HepG2 (cell line): ENCODE measurements at regions of chr7 and their contacts with region 1.

Region 1: DNA sequence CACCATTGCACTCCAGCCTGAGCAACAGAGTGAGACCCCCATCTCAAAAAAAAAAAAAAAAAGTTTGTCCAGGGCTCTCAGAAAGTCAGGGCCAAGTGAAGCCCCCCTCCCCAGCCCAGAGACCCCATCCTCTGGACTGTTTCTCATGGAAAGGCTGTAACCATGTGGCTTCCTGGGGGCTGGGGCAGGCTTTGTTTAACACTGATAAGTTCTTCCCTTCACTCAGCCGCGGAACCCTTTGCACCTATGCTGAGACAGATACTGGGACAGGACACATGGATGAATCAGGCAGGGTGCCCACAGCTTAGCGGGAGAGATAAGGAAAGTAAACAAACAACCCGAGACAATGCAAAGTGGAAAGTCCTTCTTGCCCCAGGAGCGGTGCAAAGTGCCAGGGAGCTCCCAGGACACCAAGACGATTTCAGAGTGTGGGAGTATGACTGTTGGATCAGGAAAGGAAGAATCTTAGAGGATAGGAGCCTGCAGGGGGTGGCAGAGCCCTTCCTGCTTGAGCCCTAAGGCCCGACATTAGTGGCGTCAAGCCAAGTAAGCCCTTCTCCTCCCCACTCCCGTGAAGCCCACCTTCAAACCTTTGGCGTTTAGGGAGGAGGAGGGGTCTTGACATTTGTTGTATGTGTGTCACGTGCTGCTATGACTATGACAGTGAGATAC is 11.6 kb downstream of the MLXIPL start:
- DNase-seq: peak; percentile 99
- ATAC-seq: peak; percentile 80
- H3K4me3 ChIP-seq: peak overlapping the region in 1 of 3 experiments; percentile 6; a peak in 1 of 6 replicates
- H3K27ac ChIP-seq: peak overlapping the region; percentile 76
- H3K4me1 ChIP-seq: peaks cover 98% of the 10 kb centered on the region
- H3K27me3 ChIP-seq: no peaks in the 10 kb centered on the region
- CTCF ChIP-seq: peak; percentile 65
- EP300 ChIP-seq: peak; percentile 75 to 94; a peak in 3 of 4 replicates
- POLR2A ChIP-seq: peak; percentile 29 to 41; a peak in 2 of 4 replicates
- RAD21 ChIP-seq: peak; percentile 73

Region 2: GRCh38 chr7:73647725-73648592 is 35.2 kb after region 1 on chr7:
- CTCF ChIA-PET with region 1: no interaction called
- POLR2A ChIA-PET with region 1: interaction called, 11 read pairs
- in situ Hi-C with region 1: no loop called
- intact Hi-C with region 1: no loop called
- DNase-seq: peak; percentile 41
- ATAC-seq: peak; percentile 80
- H3K4me3 ChIP-seq: peak overlapping the region; percentile 45 to 73 (median 60)
- H3K27ac ChIP-seq: peak overlapping the region; percentile 30
- H3K4me1 ChIP-seq: peaks cover 79% of the 10 kb centered on the region
- H3K27me3 ChIP-seq: peaks cover 3 to 12% of the 10 kb centered on the region in 2 experiments; a peak in 3 of 5 replicates
- CTCF ChIP-seq: peak; percentile 54
- EP300 ChIP-seq: peak in 1 of 2 experiments; percentile 62; a peak in 2 of 4 replicates
- POLR2A ChIP-seq: peak; percentile 52 to 55; a peak in 3 of 4 replicates
- RAD21 ChIP-seq: peak; percentile 87